Heart right ventricle (tissue), 16 donors: ENCODE measurements at regions of chr5 and their contacts with region 1.

Region 1: DNA sequence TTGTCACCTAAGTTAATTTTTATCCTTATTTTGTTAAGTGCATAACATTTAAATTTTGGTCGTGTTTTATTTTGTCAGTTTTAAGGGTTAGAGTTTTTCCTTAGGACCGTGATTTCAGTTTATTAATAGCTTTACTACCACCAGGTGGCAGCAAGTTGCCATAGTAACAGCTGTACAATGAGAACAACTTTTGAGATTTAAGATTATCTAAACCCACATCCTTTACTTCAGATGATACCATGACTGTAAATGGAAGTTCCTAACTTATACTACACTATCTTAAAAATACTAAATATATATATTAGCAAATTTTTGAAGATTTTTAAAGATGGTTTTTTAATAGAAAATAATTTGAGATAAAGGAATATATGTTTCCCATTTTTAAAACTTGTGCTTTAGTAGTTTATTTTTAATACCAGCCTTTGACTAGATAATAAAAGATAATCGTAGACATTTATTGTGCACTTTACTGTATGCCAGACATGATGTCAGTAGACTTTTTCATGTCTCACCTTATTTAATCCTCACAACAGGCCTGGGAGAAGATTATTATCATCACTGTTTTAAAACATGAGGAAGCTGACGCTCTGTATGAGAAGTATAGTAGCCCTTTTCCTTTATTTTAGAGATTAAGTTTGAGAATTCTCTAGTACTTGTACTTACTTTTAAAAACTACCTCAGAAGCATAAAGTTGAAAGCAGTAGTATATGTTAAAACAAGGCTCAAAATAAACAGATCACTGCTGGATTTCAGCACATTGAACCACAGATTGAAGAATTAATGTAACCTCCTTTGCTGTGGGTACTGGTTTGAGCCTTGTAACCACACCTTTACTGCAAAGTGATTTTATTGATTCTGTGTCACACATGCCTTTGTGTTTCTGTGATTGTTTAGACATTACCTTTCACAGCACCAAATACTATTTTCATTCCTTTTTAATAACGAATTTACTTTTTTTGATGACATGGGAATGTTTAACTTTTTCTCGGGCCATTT is 27.5 kb downstream of the SREK1 start:
- DNase-seq: peak in 1 of 2 donors; percentile 22
- ATAC-seq: peak in 1 of 8 donors; percentile 53
- H3K4me3 ChIP-seq: no peak overlapping the region
- H3K27ac ChIP-seq: no peak overlapping the region
- H3K4me1 ChIP-seq: peaks cover 0 to 13% (median 0%) of the 10 kb centered on the region in 9 donors
- H3K27me3 ChIP-seq: no peaks in the 10 kb centered on the region
- CTCF ChIP-seq: peak; percentile 15 to 69 (median 60)

Region 2: GRCh38 chr5:65749956-65750355 is 421.7 kb before region 1 on chr5:
- intact Hi-C with region 1: loop called in 2 of 10 experiments (anchors 10 kb)
- DNase-seq: no peak
- ATAC-seq: no peak
- H3K4me3 ChIP-seq: no peak overlapping the region
- H3K27ac ChIP-seq: no peak overlapping the region
- H3K4me1 ChIP-seq: peaks cover 0 to 9% (median 0%) of the 10 kb centered on the region in 9 donors
- H3K27me3 ChIP-seq: no peaks in the 10 kb centered on the region
- CTCF ChIP-seq: no peak

Region 3: DNA sequence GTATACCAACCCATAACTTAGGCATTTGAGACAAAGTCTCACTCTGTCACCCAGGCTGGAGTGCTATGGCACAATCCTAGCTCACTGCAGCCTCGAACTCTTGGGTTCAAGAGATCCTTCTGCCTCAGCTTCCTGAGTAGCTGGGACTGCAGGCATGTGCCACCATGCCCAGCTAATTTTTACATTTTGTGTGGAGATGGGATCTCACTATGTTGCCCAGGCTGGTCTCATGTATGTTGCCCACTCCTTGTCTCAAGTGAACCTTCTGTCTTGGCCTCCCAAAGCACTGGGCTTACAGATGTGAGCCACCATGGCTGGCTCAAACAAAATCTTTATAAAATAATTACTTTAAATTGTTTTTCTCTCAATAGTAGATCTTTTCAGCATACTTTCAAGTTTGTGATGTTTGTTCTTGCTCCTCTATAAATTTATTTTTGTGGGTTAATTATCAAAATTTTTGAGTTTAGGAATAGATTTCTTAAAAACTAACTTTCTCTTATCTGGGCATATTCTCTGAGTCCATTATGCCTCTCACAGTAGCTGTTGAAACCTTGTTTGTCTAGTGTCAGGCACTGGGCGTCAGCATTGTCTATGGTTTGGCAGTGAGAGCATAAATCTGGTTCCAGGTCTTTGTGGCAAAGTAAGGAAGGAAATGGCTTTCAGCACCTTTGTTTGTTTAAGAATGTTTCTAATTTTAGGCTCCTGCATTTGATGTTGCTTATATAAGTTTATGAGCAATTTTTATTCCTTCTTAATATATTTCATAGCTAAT is 411.0 kb before region 1 on chr5:
- intact Hi-C with region 1: loop called in 3 of 10 experiments (anchors 5 to 10 kb)
- DNase-seq: peak; percentile 13 to 56
- ATAC-seq: peak; percentile 78 to 97 (median 92)
- H3K4me3 ChIP-seq: no peak overlapping the region
- H3K27ac ChIP-seq: peak overlapping the region in 2 of 10 donors; percentile 13 to 61
- H3K4me1 ChIP-seq: peaks cover 0 to 13% (median 4%) of the 10 kb centered on the region in 9 donors
- H3K27me3 ChIP-seq: no peaks in the 10 kb centered on the region
- CTCF ChIP-seq: peak in 7 of 9 donors; percentile 14 to 70 (median 52)

Region 4: DNA sequence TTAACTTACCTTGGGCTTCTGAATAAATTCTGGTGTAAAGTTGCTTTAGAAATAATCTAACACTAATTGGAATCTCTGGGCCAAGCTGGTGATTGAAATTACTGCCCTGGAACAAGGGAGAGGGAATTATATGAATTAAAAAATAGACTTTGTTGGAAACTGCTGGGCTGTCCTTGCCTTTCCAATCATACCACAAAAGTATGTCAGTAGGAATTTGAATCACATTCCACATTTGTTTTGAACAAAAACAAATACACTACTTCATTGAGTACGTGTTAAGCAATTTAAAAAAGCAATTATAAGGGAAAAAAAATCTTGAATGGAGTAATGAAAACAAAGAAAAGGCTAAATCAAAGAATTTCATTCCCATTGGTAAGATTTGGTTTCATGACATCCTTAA is 130.0 kb before region 1 on chr5:
- intact Hi-C with region 1: loop called in 1 of 10 experiments (anchors 10 kb)
- DNase-seq: no peak
- ATAC-seq: no peak
- H3K4me3 ChIP-seq: no peak overlapping the region
- H3K27ac ChIP-seq: no peak overlapping the region
- H3K4me1 ChIP-seq: no peaks in the 10 kb centered on the region
- H3K27me3 ChIP-seq: no peaks in the 10 kb centered on the region
- CTCF ChIP-seq: no peak

Region 5: GRCh38 chr5:66100851-66101250 is 70.8 kb before region 1 on chr5:
- intact Hi-C with region 1: no loop called
- DNase-seq: no peak
- ATAC-seq: no peak
- H3K4me3 ChIP-seq: no peak overlapping the region
- H3K27ac ChIP-seq: no peak overlapping the region
- H3K4me1 ChIP-seq: no peaks in the 10 kb centered on the region
- H3K27me3 ChIP-seq: no peaks in the 10 kb centered on the region
- CTCF ChIP-seq: no peak

Region 6: GRCh38 chr5:66595756-66596635 is 424.3 kb after region 1 on chr5 and contains the start of gene MAST4:
- intact Hi-C with region 1: no loop called
- DNase-seq: peak; percentile 92 to 93
- ATAC-seq: peak; percentile 93 to 96 (median 95)
- H3K4me3 ChIP-seq: peak within 1 kb of the TSS; percentile 63 to 90 (median 75)
- H3K27ac ChIP-seq: peak within 1 kb of the TSS; percentile 44 to 83 (median 80)
- H3K4me1 ChIP-seq: peaks cover 0 to 52% (median 27%) of the 10 kb centered on the region in 9 donors
- H3K27me3 ChIP-seq: peaks cover 0 to 82% (median 0%) of the 10 kb centered on the region in 7 donors
- CTCF ChIP-seq: no peak
- total RNA-seq, gene MAST4: 58.7 to 93.3 (median 78.4) TPM

Region 7: DNA sequence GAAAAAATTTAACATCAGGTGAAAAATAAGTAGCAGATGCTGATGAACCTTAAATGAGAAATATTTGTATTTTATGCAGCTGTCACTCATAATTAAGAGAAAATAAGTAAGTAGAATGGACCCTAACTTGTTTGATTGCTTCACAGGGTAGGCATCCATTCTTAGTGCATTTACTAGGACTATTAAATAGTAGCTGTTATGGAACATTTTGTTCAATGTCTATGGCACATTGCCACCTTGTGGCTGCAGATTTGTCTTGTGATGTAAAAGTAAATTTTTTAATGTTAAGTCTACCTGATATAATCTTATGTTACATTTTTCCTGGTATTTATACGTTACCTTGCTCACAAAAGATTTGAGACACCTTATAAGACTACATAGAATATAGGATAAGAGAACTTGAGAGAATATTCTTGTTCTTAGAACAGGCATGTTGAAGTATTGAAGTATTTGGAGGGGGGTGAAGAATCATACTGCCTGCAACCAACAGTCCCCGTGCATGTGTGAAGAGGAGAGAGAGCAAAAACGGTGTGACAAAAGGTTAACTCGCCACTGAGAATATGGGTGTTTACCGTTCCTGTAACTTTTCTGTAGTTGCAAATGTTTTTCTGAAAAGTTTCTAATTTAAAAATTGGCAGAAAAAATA is 585.7 kb after region 1 on chr5:
- intact Hi-C with region 1: loop called in 2 of 10 experiments (anchors 10 kb)
- DNase-seq: peak in 1 of 2 donors; percentile 54
- ATAC-seq: peak in 6 of 8 donors; percentile 44 to 79 (median 73)
- H3K4me3 ChIP-seq: no peak overlapping the region
- H3K27ac ChIP-seq: no peak overlapping the region
- H3K4me1 ChIP-seq: peaks cover 0 to 24% (median 10%) of the 10 kb centered on the region in 9 donors
- H3K27me3 ChIP-seq: no peaks in the 10 kb centered on the region
- CTCF ChIP-seq: peak in 8 of 9 donors; percentile 26 to 70 (median 59)

Region 8: DNA sequence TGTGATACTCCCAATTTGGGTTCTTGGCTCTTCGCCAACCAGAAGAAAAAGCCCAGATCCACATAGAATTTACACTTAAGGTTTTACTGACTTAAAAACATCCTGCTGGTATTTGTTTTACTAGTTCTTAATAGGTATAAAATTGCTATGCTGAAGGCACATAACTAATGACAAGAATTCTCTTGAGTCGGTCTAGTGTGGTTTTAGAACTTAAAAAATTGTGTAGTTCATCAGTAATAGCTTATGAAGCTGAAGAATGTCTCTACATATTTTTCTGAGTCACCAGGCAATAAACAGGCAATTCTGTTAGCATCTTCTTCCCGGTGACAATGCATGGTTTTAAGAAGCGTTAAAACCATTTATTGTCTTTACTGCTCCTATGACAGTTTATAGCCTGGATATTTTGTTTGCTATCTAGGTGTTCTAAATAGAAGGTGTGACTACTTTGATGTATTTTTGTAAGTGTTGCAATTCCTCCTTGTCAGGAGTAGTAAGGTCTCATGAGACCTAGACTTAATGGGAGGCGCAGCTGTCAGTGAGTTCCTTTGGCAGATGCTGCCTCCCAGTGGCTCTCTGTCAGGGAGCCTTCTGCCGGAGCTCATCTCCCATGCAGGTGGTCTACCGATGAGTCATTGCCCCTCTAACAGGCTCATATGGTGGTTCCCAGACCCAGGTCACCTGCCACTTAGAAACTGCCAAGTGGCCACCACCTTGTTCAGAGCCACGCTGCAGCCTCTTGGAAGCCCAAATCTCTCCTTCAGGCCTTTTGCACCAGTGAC is 598.4 kb after region 1 on chr5:
- intact Hi-C with region 1: loop called in 1 of 10 experiments (anchors 10 kb)
- DNase-seq: peak in 1 of 2 donors; percentile 24
- ATAC-seq: peak in 7 of 8 donors; percentile 55 to 88 (median 70)
- H3K4me3 ChIP-seq: no peak overlapping the region
- H3K27ac ChIP-seq: peak overlapping the region in 1 of 10 donors; percentile 23
- H3K4me1 ChIP-seq: peaks cover 0 to 41% (median 13%) of the 10 kb centered on the region in 9 donors
- H3K27me3 ChIP-seq: no peaks in the 10 kb centered on the region
- CTCF ChIP-seq: peak in 7 of 9 donors; percentile 31 to 65 (median 49)